Tibial artery (tissue), 4 donors: ENCODE measurements at regions of chr16 and their contacts with region 1.

Region 1: GRCh38 chr16:66270333-66270927 is 96.1 kb upstream of the CDH5 start:
- DNase-seq: peak in 1 of 2 donors; percentile 77
- H3K4me3 ChIP-seq: peak overlapping the region; percentile 37 to 47
- H3K27ac ChIP-seq: peak overlapping the region; percentile 24 to 28
- H3K4me1 ChIP-seq: peaks cover 0 to 16% (median 9%) of the 10 kb centered on the region in 4 donors
- H3K27me3 ChIP-seq: no peaks in the 10 kb centered on the region
- CTCF ChIP-seq: peak; percentile 91 to 94

Region 2: GRCh38 chr16:65126845-65127624 is 1143.4 kb before region 1 on chr16:
- intact Hi-C with region 1: loop called (anchors 5 kb)
- DNase-seq: no peak
- H3K4me3 ChIP-seq: no peak overlapping the region
- H3K27ac ChIP-seq: no peak overlapping the region
- H3K4me1 ChIP-seq: peaks cover 0 to 19% (median 4%) of the 10 kb centered on the region in 4 donors
- H3K27me3 ChIP-seq: no peaks in the 10 kb centered on the region
- CTCF ChIP-seq: peak; percentile 20 to 32

Region 3: DNA sequence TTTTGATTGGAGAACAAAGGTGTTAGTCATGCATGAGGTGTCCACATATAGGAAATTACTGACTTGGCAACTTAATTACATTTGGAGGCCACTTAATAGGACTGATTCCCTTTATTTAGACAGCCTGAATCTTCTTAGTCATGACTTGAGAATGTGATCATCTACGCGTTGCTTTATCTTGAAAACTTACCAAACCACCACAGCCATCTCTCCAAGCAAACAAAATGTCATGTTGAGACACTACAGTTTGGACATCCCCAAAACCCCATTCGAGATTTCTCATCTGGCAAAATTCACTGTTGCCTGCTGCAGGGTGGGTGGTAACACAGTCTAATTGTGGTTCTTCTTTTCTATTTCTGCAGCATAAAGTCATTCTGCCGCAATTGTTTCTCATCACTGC is 80.5 kb before region 1 on chr16:
- intact Hi-C with region 1: no loop called
- DNase-seq: no peak
- H3K4me3 ChIP-seq: no peak overlapping the region
- H3K27ac ChIP-seq: peak overlapping the region in 1 of 2 donors; percentile 46
- H3K4me1 ChIP-seq: peaks cover 0 to 27% (median 18%) of the 10 kb centered on the region in 4 donors
- H3K27me3 ChIP-seq: no peaks in the 10 kb centered on the region
- CTCF ChIP-seq: no peak